WTC11 (cell line): ENCODE measurements at regions of chr1 and their contacts with region 1.

Region 1: GRCh38 chr1:44377925-44378784 is 23.1 kb upstream of the ERI3 start:
- DNase-seq: peak; percentile 76
- ATAC-seq: peak; percentile 85
- H3K4me3 Mint-ChIP-seq: no peak overlapping the region
- H3K27ac Mint-ChIP-seq: no peak overlapping the region
- H3K4me1 Mint-ChIP-seq: peaks cover 15% of the 10 kb centered on the region
- H3K27me3 Mint-ChIP-seq: peaks cover 4% of the 10 kb centered on the region
- CTCF ChIP-seq: peak; percentile 63

Region 2: GRCh38 chr1:44318097-44319088 is 59.8 kb before region 1 on chr1:
- CTCF ChIA-PET with region 1: interaction called, 10 read pairs
- POLR2A ChIA-PET with region 1: interaction called, 5 read pairs
- DNase-seq: peak; percentile 69
- ATAC-seq: peak; percentile 82
- H3K4me3 Mint-ChIP-seq: no peak overlapping the region
- H3K27ac Mint-ChIP-seq: peak overlapping the region; percentile 55; the same call in 1 of the 2 replicates
- H3K4me1 Mint-ChIP-seq: peaks cover 22% of the 10 kb centered on the region
- H3K27me3 Mint-ChIP-seq: no peaks in the 10 kb centered on the region
- CTCF ChIP-seq: peak; percentile 75

Region 3: DNA sequence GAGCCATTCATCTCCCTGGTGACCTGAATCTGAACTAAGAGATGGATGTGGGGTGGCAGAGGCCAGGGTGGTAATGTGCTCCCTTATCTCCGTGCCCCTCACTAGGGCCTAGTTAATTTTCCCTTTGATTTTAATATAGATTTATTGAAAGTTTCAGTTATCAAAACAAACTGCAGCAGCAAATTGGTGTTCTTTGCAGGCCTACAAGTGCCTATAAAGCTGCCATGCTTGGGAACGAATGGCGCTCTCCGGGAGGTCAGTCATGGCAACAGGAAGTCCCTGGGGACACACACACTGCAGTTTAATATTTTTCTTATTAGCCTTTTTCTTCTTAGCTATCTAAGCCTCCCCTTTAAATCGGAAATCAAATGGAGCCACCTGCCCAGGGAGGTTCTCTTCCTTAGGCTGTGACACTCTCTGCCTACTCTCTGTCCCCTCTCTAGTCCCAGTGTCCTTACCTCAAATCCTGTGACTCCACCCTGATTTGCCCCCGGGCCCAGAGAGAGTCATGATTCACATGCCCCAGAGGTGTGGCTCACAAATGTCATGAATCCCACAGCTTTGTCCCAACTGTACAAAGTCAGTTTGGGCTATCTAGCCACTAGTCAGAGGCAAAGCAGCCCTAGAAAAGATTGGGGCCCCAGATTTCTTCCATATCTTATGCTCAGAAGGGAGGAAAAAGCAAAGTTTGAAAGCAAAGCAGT is 18.8 kb before region 1 on chr1:
- CTCF ChIA-PET with region 1: interaction called, 19 read pairs
- POLR2A ChIA-PET with region 1: no interaction called
- DNase-seq: no peak
- ATAC-seq: no peak
- H3K4me3 Mint-ChIP-seq: no peak overlapping the region
- H3K27ac Mint-ChIP-seq: no peak overlapping the region
- H3K4me1 Mint-ChIP-seq: peaks cover 36% of the 10 kb centered on the region
- H3K27me3 Mint-ChIP-seq: peaks cover 10% of the 10 kb centered on the region
- CTCF ChIP-seq: no peak

Region 4: DNA sequence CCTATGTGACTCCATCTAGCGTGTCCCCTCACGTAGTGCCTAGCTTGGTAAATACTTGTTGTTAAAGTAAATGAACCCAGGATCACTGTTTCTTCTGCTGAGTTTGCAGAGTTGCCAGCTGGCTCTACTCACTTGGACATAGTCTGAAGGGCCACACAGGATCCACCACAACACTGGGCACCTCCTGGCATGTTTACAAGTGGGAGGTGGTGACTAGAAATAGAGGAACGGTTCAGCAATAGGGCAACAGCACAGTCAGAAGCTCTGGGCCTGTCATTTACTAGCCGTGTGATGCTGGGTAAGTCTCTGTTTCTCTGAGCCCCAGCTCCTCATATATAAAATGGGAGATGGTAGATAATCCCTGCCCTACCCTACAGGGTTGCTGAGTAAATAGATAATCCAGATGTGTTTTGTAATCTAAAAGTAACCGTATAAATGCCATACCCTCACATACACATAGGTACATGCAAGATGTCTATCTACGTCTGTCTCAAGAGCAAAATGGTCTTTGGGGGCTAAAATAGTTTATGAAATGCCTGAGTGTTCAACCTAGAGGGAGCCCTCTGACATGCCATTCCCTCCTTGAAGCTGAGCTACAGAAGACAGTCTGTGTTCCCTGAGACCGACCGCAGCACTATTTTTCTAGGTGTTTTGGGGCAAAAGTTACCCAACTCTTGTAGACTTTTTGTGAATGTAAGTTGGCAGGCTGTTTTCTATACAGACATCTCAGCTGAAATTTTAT is 47.4 kb after region 1 on chr1:
- CTCF ChIA-PET with region 1: interaction called, 13 read pairs
- POLR2A ChIA-PET with region 1: no interaction called
- DNase-seq: no peak
- ATAC-seq: no peak
- H3K4me3 Mint-ChIP-seq: no peak overlapping the region
- H3K27ac Mint-ChIP-seq: 0 out of 2 replicates have a peak overlapping the region, but pooled peaks have one; percentile 20
- H3K4me1 Mint-ChIP-seq: peaks cover 69% of the 10 kb centered on the region
- H3K27me3 Mint-ChIP-seq: no peaks in the 10 kb centered on the region; the same call in 1 of the 2 replicates
- CTCF ChIP-seq: no peak

Region 5: GRCh38 chr1:44485229-44485933 is 107.2 kb after region 1 on chr1:
- CTCF ChIA-PET with region 1: interaction called, 15 read pairs
- POLR2A ChIA-PET with region 1: interaction called, 3 read pairs
- DNase-seq: no peak
- ATAC-seq: no peak
- H3K4me3 Mint-ChIP-seq: no peak overlapping the region
- H3K27ac Mint-ChIP-seq: peak overlapping the region; percentile 77
- H3K4me1 Mint-ChIP-seq: peaks cover 26% of the 10 kb centered on the region
- H3K27me3 Mint-ChIP-seq: no peaks in the 10 kb centered on the region
- CTCF ChIP-seq: no peak

Region 6: GRCh38 chr1:44543064-44543744 is 165.0 kb after region 1 on chr1:
- CTCF ChIA-PET with region 1: interaction called, 47 read pairs
- POLR2A ChIA-PET with region 1: interaction called, 3 read pairs
- DNase-seq: peak; percentile 94
- ATAC-seq: peak; percentile 93
- H3K4me3 Mint-ChIP-seq: peak overlapping the region; percentile 64
- H3K27ac Mint-ChIP-seq: peak overlapping the region; percentile 99
- H3K4me1 Mint-ChIP-seq: peaks cover 78% of the 10 kb centered on the region
- H3K27me3 Mint-ChIP-seq: peaks cover 28% of the 10 kb centered on the region
- CTCF ChIP-seq: no peak

Region 7: GRCh38 chr1:44602634-44603628 is 224.8 kb after region 1 on chr1:
- CTCF ChIA-PET with region 1: interaction called, 40 read pairs
- POLR2A ChIA-PET with region 1: no interaction called
- DNase-seq: no peak
- ATAC-seq: no peak
- H3K4me3 Mint-ChIP-seq: no peak overlapping the region
- H3K27ac Mint-ChIP-seq: no peak overlapping the region
- H3K4me1 Mint-ChIP-seq: peaks cover 3% of the 10 kb centered on the region; the same call in 1 of the 2 replicates
- H3K27me3 Mint-ChIP-seq: no peaks in the 10 kb centered on the region
- CTCF ChIP-seq: no peak